Activated B cell treated with CpG ODN at 0.5 μM for 24 hours (primary cell): ENCODE measurements at regions of chr3 and their contacts with region 1.

Region 1: GRCh38 chr3:331881-332280 is 135.3 kb downstream of the CHL1 start:
- DNase-seq: no peak
- ATAC-seq: no peak
- H3K4me3 Mint-ChIP-seq: no peak overlapping the region
- H3K27ac Mint-ChIP-seq: no peak overlapping the region
- H3K4me1 Mint-ChIP-seq: peaks cover 9% of the 10 kb centered on the region
- H3K27me3 Mint-ChIP-seq: no peaks in the 10 kb centered on the region
- CTCF ChIP-seq: no peak

Region 2: GRCh38 chr3:308597-309321 is 23.1 kb before region 1 on chr3:
- CTCF ChIA-PET with region 1: no interaction called
- POLR2A ChIA-PET with region 1: no interaction called
- intact Hi-C with region 1: loop called (anchors 2 kb)
- DNase-seq: no peak
- ATAC-seq: peak; percentile 54
- H3K4me3 Mint-ChIP-seq: peak overlapping the region; percentile 42
- H3K27ac Mint-ChIP-seq: no peak overlapping the region
- H3K4me1 Mint-ChIP-seq: peaks cover 8% of the 10 kb centered on the region
- H3K27me3 Mint-ChIP-seq: no peaks in the 10 kb centered on the region
- CTCF ChIP-seq: no peak

Region 3: GRCh38 chr3:1164101-1164500 is 832.2 kb after region 1 on chr3:
- CTCF ChIA-PET with region 1: no interaction called
- POLR2A ChIA-PET with region 1: no interaction called
- intact Hi-C with region 1: no loop called
- DNase-seq: no peak
- ATAC-seq: no peak
- H3K4me3 Mint-ChIP-seq: no peak overlapping the region
- H3K27ac Mint-ChIP-seq: no peak overlapping the region
- H3K4me1 Mint-ChIP-seq: no peaks in the 10 kb centered on the region
- H3K27me3 Mint-ChIP-seq: no peaks in the 10 kb centered on the region
- CTCF ChIP-seq: no peak